Gastrocnemius medialis (tissue), 4 donors: ENCODE measurements at regions of chr14 and their contacts with region 1.

Region 1: GRCh38 chr14:90383075-90383730 is 13.6 kb upstream of the CALM1 start:
- DNase-seq: peak; percentile 99 to 100
- ATAC-seq: peak; percentile 77 to 81
- H3K4me3 ChIP-seq: peak overlapping the region; percentile 69 to 80 (median 78)
- H3K27ac ChIP-seq: peak overlapping the region; percentile 97 to 99 (median 98)
- H3K4me1 ChIP-seq: peaks cover 29 to 40% of the 10 kb centered on the region in 2 donors
- H3K27me3 ChIP-seq: no peaks in the 10 kb centered on the region
- CTCF ChIP-seq: peak in 2 of 5 experiments; percentile 27 to 39
- POLR2A ChIP-seq: peak; percentile 94 to 98

Region 2: GRCh38 chr14:90301668-90302090 is 81.5 kb before region 1 on chr14:
- in situ Hi-C with region 1: no loop called
- intact Hi-C with region 1: loop called (anchors 5 kb)
- DNase-seq: no peak
- ATAC-seq: peak; percentile 77 to 78
- H3K4me3 ChIP-seq: no peak overlapping the region
- H3K27ac ChIP-seq: peak overlapping the region; percentile 74 to 88 (median 82)
- H3K4me1 ChIP-seq: peaks cover 27 to 32% of the 10 kb centered on the region in 2 donors
- H3K27me3 ChIP-seq: no peaks in the 10 kb centered on the region
- CTCF ChIP-seq: peak in 4 of 5 experiments; percentile 36 to 66 (median 45)
- POLR2A ChIP-seq: no peak

Region 3: DNA sequence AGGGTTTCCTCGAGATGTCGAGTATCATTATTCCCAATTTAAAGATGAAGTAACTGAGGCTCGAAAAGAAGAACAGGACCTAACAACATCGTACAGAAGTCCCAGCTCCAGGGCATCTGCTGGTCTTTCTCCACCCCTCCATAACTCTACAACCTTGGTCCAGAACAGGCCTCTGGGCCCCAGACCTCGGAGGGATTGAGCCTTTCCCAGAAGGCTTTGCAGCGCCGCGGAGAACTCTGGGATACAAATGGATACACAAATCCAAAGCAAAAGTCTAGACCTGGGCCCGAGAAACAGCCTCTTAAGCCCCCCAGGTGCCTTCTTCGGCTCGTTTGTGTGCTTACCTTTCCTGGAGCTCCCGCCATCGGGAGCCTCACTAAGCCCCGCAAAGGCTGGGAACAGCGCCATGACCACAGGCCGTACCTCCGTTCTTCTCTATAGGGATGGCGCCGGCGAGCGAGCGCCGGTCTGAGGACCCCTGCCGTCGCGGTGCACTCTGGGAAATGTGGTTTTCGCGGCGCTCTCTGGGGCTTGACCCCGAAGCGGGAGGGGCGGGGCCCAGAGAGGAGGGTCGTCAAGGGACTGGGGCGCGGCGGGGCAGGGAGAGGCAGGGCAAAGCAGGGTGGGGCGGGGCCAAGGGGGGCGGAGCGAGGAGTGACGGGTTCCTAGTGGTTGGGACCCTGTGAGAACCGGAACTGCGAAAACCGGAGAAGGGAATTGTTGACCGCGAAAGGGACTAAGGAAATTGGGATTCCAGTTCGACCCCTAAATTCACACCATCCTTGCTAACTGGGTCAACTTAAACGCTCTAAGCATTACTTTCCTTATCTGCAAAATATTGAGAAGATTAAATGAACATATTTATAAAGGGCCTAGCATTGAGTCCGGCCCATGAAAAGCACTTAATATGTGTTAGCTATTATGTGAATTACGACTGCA is 51.4 kb before region 1 on chr14 and contains the start of gene NRDE2:
- in situ Hi-C with region 1: no loop called
- intact Hi-C with region 1: loop called (anchors 2 kb)
- DNase-seq: peak; percentile 98 to 99
- ATAC-seq: peak; percentile 93 to 96
- H3K4me3 ChIP-seq: peak within 1 kb of the TSS; percentile 61 to 90 (median 80)
- H3K27ac ChIP-seq: peak within 1 kb of the TSS; percentile 79 to 93 (median 86)
- H3K4me1 ChIP-seq: peaks cover 9 to 12% of the 10 kb centered on the region in 2 donors
- H3K27me3 ChIP-seq: peaks cover 0 to 4% (median 0%) of the 10 kb centered on the region in 3 donors
- CTCF ChIP-seq: no peak
- POLR2A ChIP-seq: peak; percentile 35 to 58
- total RNA-seq, gene NRDE2: 7.5 to 11.8 (median 10.2) TPM

Region 4: DNA sequence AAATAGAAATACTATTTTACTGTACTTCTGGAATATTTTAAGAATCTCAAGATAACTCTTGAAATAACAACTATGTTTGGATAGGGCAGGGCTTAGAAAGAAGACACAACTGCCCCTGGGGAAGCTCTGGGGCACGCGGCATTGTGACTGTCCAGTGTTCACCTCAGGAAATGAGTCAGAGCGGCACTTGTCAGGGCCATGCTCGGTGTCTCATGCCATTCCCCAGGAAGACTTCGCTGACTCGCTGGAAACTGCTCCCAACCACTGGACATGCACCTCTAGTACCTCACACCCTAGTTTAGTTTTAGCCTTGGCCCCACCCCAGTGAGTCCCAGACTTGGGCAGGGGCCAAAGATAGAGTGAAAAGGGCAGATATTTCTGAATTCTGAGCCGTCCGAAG is 241.0 kb after region 1 on chr14:
- in situ Hi-C with region 1: no loop called
- intact Hi-C with region 1: loop called (anchors 5 kb)
- DNase-seq: peak; percentile 94 to 97
- ATAC-seq: peak; percentile 58 to 64
- H3K4me3 ChIP-seq: peak overlapping the region in 2 of 4 donors; percentile 9 to 28
- H3K27ac ChIP-seq: peak overlapping the region; percentile 89 to 96 (median 94)
- H3K4me1 ChIP-seq: peaks cover 51 to 68% of the 10 kb centered on the region in 2 donors
- H3K27me3 ChIP-seq: no peaks in the 10 kb centered on the region
- CTCF ChIP-seq: no peak
- POLR2A ChIP-seq: peak; percentile 47 to 48

Region 5: GRCh38 chr14:90815822-90816700 is 432.9 kb after region 1 on chr14 and contains the start of gene TTC7B:
- in situ Hi-C with region 1: no loop called
- intact Hi-C with region 1: loop called (anchors 5 kb)
- DNase-seq: peak in 1 of 2 donors; percentile 28
- ATAC-seq: peak; percentile 87 to 91
- H3K4me3 ChIP-seq: peak within 1 kb of the TSS; percentile 73 to 81 (median 76)
- H3K27ac ChIP-seq: peak within 1 kb of the TSS; percentile 52 to 70 (median 65)
- H3K4me1 ChIP-seq: peaks cover 25 to 35% of the 10 kb centered on the region in 2 donors
- H3K27me3 ChIP-seq: no peaks in the 10 kb centered on the region
- CTCF ChIP-seq: peak in 2 of 5 experiments; percentile 40 to 49
- POLR2A ChIP-seq: no peak
- total RNA-seq, gene TTC7B: 35.0 to 78.7 (median 36.8) TPM

Region 6: GRCh38 chr14:91154851-91155625 is 771.8 kb after region 1 on chr14:
- in situ Hi-C with region 1: loop called in 2 of 4 experiments (anchors 25 kb)
- intact Hi-C with region 1: loop called (anchors 10 kb)
- DNase-seq: peak; percentile 30 to 62
- ATAC-seq: peak; percentile 11 to 17
- H3K4me3 ChIP-seq: no peak overlapping the region
- H3K27ac ChIP-seq: peak overlapping the region; percentile 76 to 94 (median 80)
- H3K4me1 ChIP-seq: peaks cover 45 to 51% of the 10 kb centered on the region in 2 donors
- H3K27me3 ChIP-seq: no peaks in the 10 kb centered on the region
- CTCF ChIP-seq: no peak
- POLR2A ChIP-seq: no peak